AG04450 (cell line): ENCODE measurements at regions of chr18 and their contacts with region 1.

Region 1: DNA sequence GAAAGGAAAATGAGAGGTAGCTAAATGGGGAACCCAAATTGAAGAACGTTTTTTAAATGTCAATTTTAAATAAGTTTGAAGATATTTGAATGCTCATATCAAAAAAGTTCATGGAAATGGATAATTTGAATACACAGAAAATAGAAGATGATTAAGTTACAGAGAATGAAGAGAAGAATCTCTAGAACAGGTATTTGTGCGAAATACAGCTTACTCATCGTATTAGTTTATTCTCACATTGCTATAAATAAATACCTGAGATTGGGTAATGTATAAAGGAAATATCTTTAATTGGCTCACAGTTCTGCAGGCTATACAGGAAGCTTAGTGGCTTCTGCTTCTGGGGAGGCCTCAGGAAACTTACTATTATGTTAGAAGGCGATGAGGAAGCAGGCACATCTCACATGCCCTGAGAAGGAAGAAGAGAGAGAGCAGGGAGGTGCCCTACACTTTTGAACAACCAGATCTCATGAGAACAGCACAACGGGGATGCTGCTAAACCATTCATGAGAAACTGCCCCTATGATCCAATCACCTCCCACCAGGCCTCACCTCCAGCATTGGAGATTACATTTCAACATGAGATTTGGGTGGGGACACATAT is 89.7 kb upstream of the DTNA start:
- DNase-seq: no peak
- H3K4me3 ChIP-seq: no peak overlapping the region
- H3K27ac ChIP-seq: no peak overlapping the region
- H3K27me3 ChIP-seq: no peaks in the 10 kb centered on the region
- CTCF ChIP-seq: no peak

Region 2: DNA sequence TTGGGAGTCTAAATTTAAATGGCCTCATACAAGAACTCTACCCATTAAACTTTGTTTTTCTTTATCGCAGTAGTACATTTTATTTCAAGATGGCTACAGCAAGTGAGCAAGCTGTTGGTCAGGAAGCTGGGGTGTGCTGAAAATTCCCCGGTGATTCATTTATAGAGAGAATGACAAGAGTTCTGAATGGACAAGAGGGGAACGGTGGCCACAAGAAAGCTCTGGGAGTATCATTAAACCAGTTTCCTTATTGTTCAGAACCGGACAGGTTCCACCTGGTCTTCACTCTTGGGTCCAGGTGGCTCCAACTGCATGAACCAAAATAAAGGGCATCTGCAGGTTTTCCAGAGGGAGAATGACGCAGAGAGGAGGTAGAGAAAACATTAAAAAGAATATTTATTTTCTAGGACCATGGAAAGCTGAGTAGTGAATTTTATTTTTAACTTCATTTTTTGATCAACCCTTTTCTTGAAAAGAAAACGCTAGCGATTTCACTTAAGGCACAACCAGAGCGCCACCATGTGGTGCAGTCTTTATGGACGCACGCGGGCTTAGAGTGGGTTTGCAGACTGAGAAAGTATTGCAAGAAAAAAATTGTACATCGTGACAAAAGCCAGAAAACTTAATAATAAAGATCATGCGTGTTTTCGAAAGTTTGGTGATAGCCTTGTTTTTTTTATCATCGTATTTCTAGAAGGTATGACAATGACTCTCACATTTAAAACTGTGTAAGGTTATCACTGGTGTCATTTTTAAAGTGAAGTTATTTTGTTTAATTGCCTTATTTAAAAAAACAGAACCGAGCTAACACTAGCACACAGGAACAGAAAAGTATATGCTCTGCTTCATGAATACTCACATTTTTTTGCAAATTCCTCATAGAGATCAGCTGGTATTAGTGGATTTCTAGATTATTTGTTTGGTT is 297.7 kb before region 1 on chr18:
- CTCF ChIA-PET with region 1: no interaction called
- POLR2A ChIA-PET with region 1: interaction called, 16 read pairs
- DNase-seq: peak; percentile 8
- H3K4me3 ChIP-seq: no peak overlapping the region
- H3K27ac ChIP-seq: no peak overlapping the region
- H3K27me3 ChIP-seq: no peaks in the 10 kb centered on the region
- CTCF ChIP-seq: peak; percentile 71

Region 3: GRCh38 chr18:34506198-34506597 is 114.2 kb before region 1 on chr18:
- CTCF ChIA-PET with region 1: no interaction called
- POLR2A ChIA-PET with region 1: no interaction called
- DNase-seq: no peak
- H3K4me3 ChIP-seq: no peak overlapping the region
- H3K27ac ChIP-seq: no peak overlapping the region
- H3K27me3 ChIP-seq: no peaks in the 10 kb centered on the region
- CTCF ChIP-seq: no peak